ENCODE measurements at regions of chr13 and their contacts with region 1.

Region 1: GRCh38 chr13:21095311-21095710 is 33.9 kb upstream of the LATS2 start:
- DNase-seq: no peak
- ATAC-seq: no peak
- H3K4me3 ChIP-seq: no peak overlapping the region
- H3K4me3 Mint-ChIP-seq: no peak overlapping the region
- H3K27ac ChIP-seq: no peak overlapping the region
- H3K27ac Mint-ChIP-seq: no peak overlapping the region
- H3K4me1 ChIP-seq: no peaks in the 10 kb centered on the region
- H3K4me1 Mint-ChIP-seq: no peaks in the 10 kb centered on the region
- H3K27me3 ChIP-seq: no peaks in the 10 kb centered on the region
- H3K27me3 Mint-ChIP-seq: peaks cover 0 to 4% (median 4%) of the 10 kb centered on the region in 5 donors

Region 2: GRCh38 chr13:21045100-21045499 is 50.2 kb before region 1 on chr13:
- CTCF ChIA-PET with region 1: no interaction called
- POLR2A ChIA-PET with region 1: no interaction called
- intact Hi-C with region 1: loop called in 1 of 2 experiments (anchors 1 kb)
- DNase-seq: no peak
- ATAC-seq: no peak
- H3K4me3 ChIP-seq: no peak overlapping the region
- H3K4me3 Mint-ChIP-seq: no peak overlapping the region
- H3K27ac ChIP-seq: no peak overlapping the region
- H3K27ac Mint-ChIP-seq: no peak overlapping the region
- H3K4me1 ChIP-seq: no peaks in the 10 kb centered on the region
- H3K4me1 Mint-ChIP-seq: peaks cover 0 to 23% (median 3%) of the 10 kb centered on the region in 7 donors
- H3K27me3 ChIP-seq: no peaks in the 10 kb centered on the region
- H3K27me3 Mint-ChIP-seq: peaks cover 0 to 7% (median 0%) of the 10 kb centered on the region in 5 donors

Measured in naive thymus-derived CD4-positive, alpha-beta T cell (primary cell).